Ascending aorta (tissue), 2 donors: ENCODE measurements at regions of chr15 and their contacts with region 1.

Region 1: DNA sequence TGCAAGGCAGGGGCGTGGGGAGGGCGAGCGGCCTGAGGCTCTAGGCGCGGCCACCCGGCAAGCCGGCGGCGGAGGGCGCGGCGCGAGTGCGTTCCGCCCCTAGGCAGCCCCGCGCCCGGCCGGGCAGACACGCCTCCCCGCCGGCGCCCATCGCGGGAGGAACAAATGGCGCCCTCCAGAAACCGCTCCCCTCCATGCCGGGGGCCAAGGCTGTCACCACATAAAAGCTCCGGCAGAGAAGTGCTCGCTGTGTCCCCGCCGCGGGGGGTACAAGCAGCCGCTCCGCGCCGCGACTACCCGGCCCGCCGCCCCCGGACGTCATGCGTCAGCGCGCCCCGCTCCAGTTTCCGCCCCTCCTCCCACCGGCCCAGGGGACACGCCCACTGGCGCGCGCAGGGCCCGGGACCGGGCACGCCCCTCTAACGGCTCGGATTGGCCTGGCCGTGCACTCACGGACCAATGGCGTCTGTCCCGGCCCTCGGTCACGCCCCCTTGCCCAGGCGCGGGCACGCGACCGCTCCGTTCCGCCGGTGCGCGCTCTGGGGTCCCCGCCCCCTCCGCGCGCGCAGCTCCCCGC is 391 bp upstream of the KLF13 start:
- DNase-seq: peak; percentile 93 to 99
- H3K4me3 ChIP-seq: peak overlapping the region; percentile 74 to 90
- H3K27ac ChIP-seq: peak overlapping the region; percentile 95 to 99
- H3K4me1 ChIP-seq: peaks cover 5 to 27% of the 10 kb centered on the region in 2 donors
- H3K27me3 ChIP-seq: no peaks in the 10 kb centered on the region
- CTCF ChIP-seq: no peak

Region 2: GRCh38 chr15:30991255-30992072 is 334.8 kb before region 1 on chr15 and contains the start of gene MTMR10:
- intact Hi-C with region 1: loop called (anchors 5 kb)
- DNase-seq: peak in 1 of 2 donors; percentile 82
- H3K4me3 ChIP-seq: peak within 1 kb of the TSS; percentile 81 to 95
- H3K27ac ChIP-seq: peak within 1 kb of the TSS; percentile 83 to 96
- H3K4me1 ChIP-seq: peaks cover 5 to 6% of the 10 kb centered on the region in 2 donors
- H3K27me3 ChIP-seq: no peaks in the 10 kb centered on the region
- CTCF ChIP-seq: peak in 1 of 3 experiments; percentile 40
- total RNA-seq, gene MTMR10: 4.5 TPM

Region 3: GRCh38 chr15:31236184-31237042 is 89.8 kb before region 1 on chr15:
- intact Hi-C with region 1: loop called (anchors 1 kb)
- DNase-seq: peak; percentile 46 to 92
- H3K4me3 ChIP-seq: peak overlapping the region in 1 of 2 donors; percentile 56
- H3K27ac ChIP-seq: peak overlapping the region; percentile 56 to 81
- H3K4me1 ChIP-seq: peaks cover 0 to 13% of the 10 kb centered on the region in 2 donors
- H3K27me3 ChIP-seq: no peaks in the 10 kb centered on the region
- CTCF ChIP-seq: no peak

Region 4: GRCh38 chr15:31338879-31339557 is 12.8 kb after region 1 on chr15:
- intact Hi-C with region 1: no loop called
- DNase-seq: peak in 1 of 2 donors; percentile 88
- H3K4me3 ChIP-seq: peak overlapping the region in 1 of 2 donors; percentile 19
- H3K27ac ChIP-seq: peak overlapping the region; percentile 66 to 81
- H3K4me1 ChIP-seq: peaks cover 20 to 53% of the 10 kb centered on the region in 2 donors
- H3K27me3 ChIP-seq: no peaks in the 10 kb centered on the region
- CTCF ChIP-seq: no peak

Region 5: GRCh38 chr15:31365655-31366127 is 39.4 kb after region 1 on chr15:
- intact Hi-C with region 1: loop called (anchors 1 kb)
- DNase-seq: peak; percentile 88 to 98
- H3K4me3 ChIP-seq: peak overlapping the region; percentile 18 to 58
- H3K27ac ChIP-seq: peak overlapping the region; percentile 74 to 79
- H3K4me1 ChIP-seq: peaks cover 15 to 38% of the 10 kb centered on the region in 2 donors
- H3K27me3 ChIP-seq: no peaks in the 10 kb centered on the region
- CTCF ChIP-seq: peak; percentile 20 to 63 (median 52)

Region 6: DNA sequence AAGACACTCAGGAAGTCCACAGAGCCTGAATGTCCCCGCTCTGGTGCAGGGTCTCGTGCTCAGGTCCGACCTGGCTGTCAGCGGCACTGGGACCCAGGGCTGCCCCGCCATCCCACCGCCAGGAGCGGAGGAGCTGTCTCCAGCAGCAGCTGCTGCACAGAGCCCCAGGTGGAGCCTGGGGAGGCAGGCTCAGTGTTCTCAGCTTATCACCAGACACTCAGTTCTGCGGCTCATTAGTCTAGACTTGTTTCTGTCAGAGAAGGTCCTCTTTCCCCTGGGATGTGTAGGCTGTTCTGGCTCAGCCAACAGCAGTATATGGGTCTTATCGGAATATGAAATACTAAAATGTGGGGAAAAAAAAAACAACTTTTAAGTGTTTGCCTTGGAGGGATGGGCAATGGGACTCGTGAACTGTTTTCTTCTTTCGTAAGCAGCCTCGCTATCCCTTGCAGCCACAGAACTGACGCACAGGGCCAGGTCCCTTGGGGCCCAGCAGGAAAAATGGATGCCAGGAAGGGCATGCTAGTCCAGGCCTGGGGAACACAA is 76.3 kb after region 1 on chr15:
- intact Hi-C with region 1: loop called (anchors 2 kb)
- DNase-seq: peak in 1 of 2 donors; percentile 93
- H3K4me3 ChIP-seq: peak overlapping the region in 1 of 2 donors; percentile 20
- H3K27ac ChIP-seq: peak overlapping the region; percentile 89 to 90
- H3K4me1 ChIP-seq: peaks cover 7 to 17% of the 10 kb centered on the region in 2 donors
- H3K27me3 ChIP-seq: no peaks in the 10 kb centered on the region
- CTCF ChIP-seq: no peak

Region 7: DNA sequence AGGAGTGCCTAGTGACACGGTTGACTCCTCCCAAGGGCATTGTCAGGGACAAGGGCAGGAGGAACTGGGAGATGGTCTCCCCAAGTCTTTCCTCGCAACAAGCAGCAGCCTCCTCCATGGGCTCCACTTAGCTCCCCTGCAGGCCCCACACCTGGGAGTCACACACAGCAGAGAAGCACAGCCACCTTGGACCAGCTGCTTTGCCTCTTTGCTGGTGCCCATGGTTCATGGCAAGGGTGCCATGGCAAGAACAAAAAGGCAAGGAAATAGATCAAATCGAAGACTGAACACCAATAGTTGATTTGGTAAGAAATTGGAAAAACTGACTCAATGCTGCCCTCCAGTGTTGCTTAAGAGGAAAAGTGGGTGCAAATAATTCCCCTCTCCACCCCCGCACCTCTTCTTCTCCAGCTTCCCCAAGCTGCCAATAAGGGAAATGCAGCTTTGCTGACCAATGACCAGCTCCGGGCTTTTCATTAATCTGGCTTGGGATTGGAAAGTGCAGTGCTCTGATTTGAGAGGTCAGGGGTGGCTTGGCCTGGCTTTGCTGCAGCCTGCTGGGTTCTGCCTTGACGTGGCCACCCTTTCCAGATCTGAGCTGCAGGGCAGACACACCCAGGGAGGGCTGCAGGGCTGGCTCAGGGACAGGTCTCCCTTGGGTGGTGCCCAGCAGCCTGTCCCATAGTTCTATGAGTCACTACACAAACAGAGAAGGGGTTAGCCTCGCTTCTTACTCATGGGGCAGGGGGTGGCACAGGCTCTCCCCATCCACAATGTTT is 162.4 kb after region 1 on chr15:
- intact Hi-C with region 1: loop called (anchors 1 kb)
- DNase-seq: peak; percentile 26 to 86
- H3K4me3 ChIP-seq: no peak overlapping the region
- H3K27ac ChIP-seq: peak overlapping the region; percentile 76 to 81
- H3K4me1 ChIP-seq: peaks cover 10 to 23% of the 10 kb centered on the region in 2 donors
- H3K27me3 ChIP-seq: no peaks in the 10 kb centered on the region
- CTCF ChIP-seq: peak; percentile 84 to 91 (median 87)